ENCODE measurements at regions of chr9 and their contacts with region 1.

Region 1: GRCh38 chr9:92764988-92765936 is 629 bp upstream of the BICD2 start:
- DNase-seq: peak; percentile 85
- H3K4me3 ChIP-seq: peak overlapping the region; percentile 67
- H3K27ac ChIP-seq: peak overlapping the region; percentile 96
- H3K27me3 ChIP-seq: peaks cover 2% of the 10 kb centered on the region
- CTCF ChIP-seq: peak; percentile 94

Region 2: GRCh38 chr9:91766315-91767069 is 998.8 kb before region 1 on chr9:
- CTCF ChIA-PET with region 1: no interaction called
- POLR2A ChIA-PET with region 1: no interaction called
- DNase-seq: no peak
- H3K4me3 ChIP-seq: no peak overlapping the region
- H3K27ac ChIP-seq: no peak overlapping the region
- H3K27me3 ChIP-seq: peaks cover 21% of the 10 kb centered on the region
- CTCF ChIP-seq: no peak

Region 3: DNA sequence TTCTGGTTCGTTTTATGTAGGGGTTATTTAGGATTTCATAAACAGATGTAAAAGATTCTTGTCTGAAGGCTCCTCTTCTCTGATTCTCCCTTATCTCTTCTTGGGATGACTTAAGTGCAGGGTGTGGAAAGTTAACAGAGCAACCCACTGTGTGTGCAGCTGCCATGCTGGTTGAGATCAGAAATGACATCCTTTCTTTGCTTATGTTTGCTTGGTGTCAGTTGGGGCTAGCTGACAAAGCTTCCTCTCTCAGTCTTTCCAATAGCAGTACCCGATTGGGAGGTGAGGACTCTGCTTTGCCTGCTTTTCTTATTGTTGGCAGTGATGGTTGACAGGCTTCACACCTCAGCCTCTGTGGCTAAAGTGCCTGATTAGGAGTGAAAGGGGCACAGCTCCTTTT is 387.4 kb before region 1 on chr9:
- CTCF ChIA-PET with region 1: no interaction called
- POLR2A ChIA-PET with region 1: no interaction called
- DNase-seq: no peak
- H3K4me3 ChIP-seq: no peak overlapping the region
- H3K27ac ChIP-seq: no peak overlapping the region
- H3K27me3 ChIP-seq: no peaks in the 10 kb centered on the region
- CTCF ChIP-seq: no peak

Region 4: GRCh38 chr9:92728831-92729734 is 36.2 kb before region 1 on chr9:
- CTCF ChIA-PET with region 1: interaction called, 10 read pairs
- POLR2A ChIA-PET with region 1: no interaction called
- DNase-seq: no peak
- H3K4me3 ChIP-seq: no peak overlapping the region
- H3K27ac ChIP-seq: no peak overlapping the region
- H3K27me3 ChIP-seq: no peaks in the 10 kb centered on the region
- CTCF ChIP-seq: peak; percentile 59

Region 5: GRCh38 chr9:92882276-92882675 is 117.0 kb after region 1 on chr9:
- CTCF ChIA-PET with region 1: no interaction called
- POLR2A ChIA-PET with region 1: no interaction called
- DNase-seq: no peak
- H3K4me3 ChIP-seq: no peak overlapping the region
- H3K27ac ChIP-seq: no peak overlapping the region
- H3K27me3 ChIP-seq: peaks cover 3% of the 10 kb centered on the region
- CTCF ChIP-seq: no peak

Region 6: DNA sequence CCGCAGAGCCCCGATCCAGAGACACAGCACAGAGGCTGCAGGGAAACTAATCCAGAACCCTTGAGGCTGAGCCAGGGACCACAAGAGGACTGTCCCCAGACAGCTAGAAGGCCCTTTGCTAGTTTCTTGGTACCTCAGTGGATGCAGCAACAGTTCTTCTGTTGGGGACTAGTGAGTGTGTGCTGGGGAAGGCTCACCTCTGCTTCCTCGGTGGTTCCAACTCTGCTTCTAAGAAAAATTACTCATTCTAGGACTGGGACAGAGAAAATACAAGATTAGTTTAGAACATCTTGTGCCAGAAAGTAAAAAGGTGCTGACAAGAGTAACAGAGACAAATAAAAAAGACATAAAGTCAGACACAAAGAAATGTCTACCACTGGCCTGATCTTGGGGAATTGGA is 132.1 kb after region 1 on chr9:
- CTCF ChIA-PET with region 1: no interaction called
- POLR2A ChIA-PET with region 1: no interaction called
- DNase-seq: no peak
- H3K4me3 ChIP-seq: no peak overlapping the region
- H3K27ac ChIP-seq: no peak overlapping the region
- H3K27me3 ChIP-seq: no peaks in the 10 kb centered on the region
- CTCF ChIP-seq: no peak

Measured in AG04450 (cell line).